Psoas muscle (tissue), 8 donors: ENCODE measurements at regions of chr4 and their contacts with region 1.

Region 1: DNA sequence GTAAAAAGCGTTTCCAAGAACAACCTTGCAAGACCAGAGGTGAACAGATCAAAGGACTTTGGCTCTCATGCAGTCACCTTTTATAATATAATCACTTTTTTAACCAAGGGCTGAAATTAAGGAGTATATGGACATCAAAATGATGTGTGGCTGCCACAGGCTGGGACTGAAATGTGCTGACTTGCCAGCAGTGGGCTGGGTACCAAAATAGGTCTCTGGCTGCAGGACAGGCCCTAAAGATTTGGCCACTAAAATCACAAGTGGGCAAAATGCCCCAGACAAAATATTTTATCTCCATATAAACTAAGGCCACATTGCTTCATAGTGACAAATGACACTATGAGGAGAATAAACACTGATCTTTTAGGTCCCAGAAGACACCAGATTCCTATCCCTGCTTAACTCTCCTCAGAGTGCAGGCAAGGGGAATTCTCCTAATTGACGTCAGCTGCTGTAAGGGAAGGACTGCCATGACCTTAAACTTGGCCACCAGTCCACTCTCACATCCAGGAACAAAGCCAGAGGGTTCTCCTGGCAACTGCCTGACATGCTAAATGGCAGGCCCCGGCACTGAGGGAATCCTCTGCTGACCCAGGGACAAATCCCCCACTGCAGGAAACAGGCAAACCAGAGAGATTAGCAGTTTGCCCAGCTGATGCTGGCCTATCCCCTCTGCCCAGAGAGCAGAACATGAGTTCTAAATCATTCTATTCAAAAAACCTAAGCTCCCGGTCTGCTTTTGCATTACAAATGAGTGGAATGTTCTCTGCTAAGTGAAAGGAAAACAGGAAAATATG is 155.8 kb downstream of the PPP3CA start:
- DNase-seq: peak; percentile 67 to 79
- ATAC-seq: peak; percentile 97 to 99 (median 98)
- H3K4me3 ChIP-seq: peak overlapping the region; percentile 24
- H3K27ac ChIP-seq: peak overlapping the region; percentile 64
- H3K4me1 ChIP-seq: peaks cover 49% of the 10 kb centered on the region
- H3K27me3 ChIP-seq: no peaks in the 10 kb centered on the region
- CTCF ChIP-seq: peak; percentile 5

Region 2: DNA sequence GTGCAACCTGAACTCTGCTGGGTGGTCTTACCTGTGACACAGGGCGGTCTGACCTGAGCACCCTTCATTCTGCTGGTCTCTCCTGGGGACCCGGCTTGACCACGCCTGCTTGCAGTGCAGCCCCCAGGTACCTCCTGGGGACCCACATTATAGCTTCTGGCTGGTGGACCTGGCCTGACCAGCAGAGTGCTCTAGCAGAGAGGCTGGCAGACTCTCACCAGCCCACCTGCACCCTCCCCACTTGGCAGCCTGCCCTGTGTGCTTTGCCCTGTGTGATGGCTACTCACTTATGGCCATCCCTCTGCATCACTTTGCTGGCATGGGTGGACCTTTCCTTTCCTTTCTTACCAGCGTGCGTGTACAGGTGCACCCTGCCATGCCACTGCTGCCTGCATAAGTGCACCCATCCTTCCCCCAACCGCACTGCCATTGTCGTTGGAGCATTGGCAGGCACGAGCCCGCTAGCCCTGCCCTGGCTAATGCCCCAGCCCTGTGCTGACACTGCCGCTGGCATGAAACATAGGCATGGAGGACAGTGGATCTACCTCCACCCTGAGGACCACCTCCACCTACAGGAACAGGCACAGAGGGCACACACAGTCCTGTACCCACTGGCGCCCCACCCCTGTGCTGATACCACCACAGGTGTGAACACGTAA is 1219.9 kb before region 1 on chr4:
- intact Hi-C with region 1: no loop called
- DNase-seq: no peak
- ATAC-seq: no peak
- H3K4me3 ChIP-seq: no peak overlapping the region
- H3K27ac ChIP-seq: no peak overlapping the region
- H3K4me1 ChIP-seq: no peaks in the 10 kb centered on the region
- H3K27me3 ChIP-seq: no peaks in the 10 kb centered on the region
- CTCF ChIP-seq: no peak

Region 3: DNA sequence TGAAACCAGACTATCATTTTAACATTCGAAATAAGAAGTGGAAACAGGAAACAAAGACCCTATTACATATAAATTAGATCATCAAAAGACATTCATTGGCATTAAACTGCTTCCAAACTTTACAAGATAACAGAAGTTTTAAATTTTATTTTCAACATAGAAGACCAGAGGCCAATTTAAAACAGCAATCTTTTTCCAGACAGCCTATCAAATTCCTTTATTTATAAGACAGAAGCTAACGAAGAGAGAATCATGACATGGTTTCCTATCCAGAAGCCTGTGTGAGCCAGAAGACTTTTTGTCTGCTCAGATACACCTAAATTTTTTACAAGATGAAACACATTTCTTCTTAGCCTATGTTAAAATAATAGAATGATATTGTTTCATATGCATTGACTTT is 136.1 kb before region 1 on chr4:
- intact Hi-C with region 1: no loop called
- DNase-seq: no peak
- ATAC-seq: no peak
- H3K4me3 ChIP-seq: no peak overlapping the region
- H3K27ac ChIP-seq: no peak overlapping the region
- H3K4me1 ChIP-seq: peaks cover 7% of the 10 kb centered on the region
- H3K27me3 ChIP-seq: no peaks in the 10 kb centered on the region
- CTCF ChIP-seq: no peak

Region 4: GRCh38 chr4:101229116-101229515 is 37.6 kb after region 1 on chr4:
- intact Hi-C with region 1: loop called in 1 of 2 experiments (anchors 5 kb)
- DNase-seq: no peak
- ATAC-seq: no peak
- H3K4me3 ChIP-seq: no peak overlapping the region
- H3K27ac ChIP-seq: no peak overlapping the region
- H3K4me1 ChIP-seq: peaks cover 55% of the 10 kb centered on the region
- H3K27me3 ChIP-seq: no peaks in the 10 kb centered on the region
- CTCF ChIP-seq: no peak

Region 5: GRCh38 chr4:101239665-101240064 is 48.2 kb after region 1 on chr4:
- intact Hi-C with region 1: no loop called
- DNase-seq: no peak
- ATAC-seq: no peak
- H3K4me3 ChIP-seq: no peak overlapping the region
- H3K27ac ChIP-seq: no peak overlapping the region
- H3K4me1 ChIP-seq: peaks cover 35% of the 10 kb centered on the region
- H3K27me3 ChIP-seq: no peaks in the 10 kb centered on the region
- CTCF ChIP-seq: no peak

Region 6: GRCh38 chr4:101649790-101650515 is 458.5 kb after region 1 on chr4:
- intact Hi-C with region 1: loop called in 1 of 2 experiments (anchors 2 kb)
- DNase-seq: no peak
- ATAC-seq: peak in 1 of 4 donors; percentile 61
- H3K4me3 ChIP-seq: no peak overlapping the region
- H3K27ac ChIP-seq: peak overlapping the region; percentile 19
- H3K4me1 ChIP-seq: peaks cover 3% of the 10 kb centered on the region
- H3K27me3 ChIP-seq: no peaks in the 10 kb centered on the region
- CTCF ChIP-seq: no peak